ENCODE measurements at regions of chr1 and their contacts with region 1.

Region 1: GRCh38 chr1:165364568-165365133 is 8.1 kb upstream of the LMX1A start:
- DNase-seq: no peak
- ATAC-seq: no peak
- H3K4me3 ChIP-seq: no peak overlapping the region
- H3K4me3 Mint-ChIP-seq: no peak overlapping the region
- H3K27ac ChIP-seq: no peak overlapping the region
- H3K27ac Mint-ChIP-seq: no peak overlapping the region
- H3K4me1 ChIP-seq: no peaks in the 10 kb centered on the region
- H3K4me1 Mint-ChIP-seq: peaks cover 0 to 5% of the 10 kb centered on the region in 2 donors
- H3K27me3 ChIP-seq: no peaks in the 10 kb centered on the region
- H3K27me3 Mint-ChIP-seq: peaks cover 30 to 32% of the 10 kb centered on the region in 2 donors
- CTCF ChIP-seq: no peak

Region 2: DNA sequence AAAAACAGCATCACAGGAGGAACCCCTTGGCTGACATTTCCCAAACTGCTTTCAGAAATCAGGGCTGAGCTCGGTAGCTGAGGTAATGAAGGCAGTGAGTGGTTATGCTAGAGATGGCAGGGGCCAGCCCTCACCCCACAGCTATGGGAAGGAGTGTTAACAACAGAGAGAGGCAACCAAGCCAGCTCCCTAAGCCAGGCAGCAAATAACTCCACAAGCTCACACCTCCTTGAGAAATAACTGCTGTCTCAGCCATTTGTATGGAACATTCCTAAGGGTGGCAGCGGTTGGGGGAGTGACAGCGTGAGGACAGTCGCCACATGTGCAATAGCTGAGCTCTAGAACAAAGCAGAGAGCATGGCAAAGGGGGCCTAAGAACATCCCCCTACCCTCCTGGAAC is 50.7 kb before region 1 on chr1:
- intact Hi-C with region 1: loop called (anchors 5 kb)
- DNase-seq: no peak
- ATAC-seq: no peak
- H3K4me3 ChIP-seq: no peak overlapping the region
- H3K4me3 Mint-ChIP-seq: no peak overlapping the region
- H3K27ac ChIP-seq: no peak overlapping the region
- H3K27ac Mint-ChIP-seq: no peak overlapping the region
- H3K4me1 ChIP-seq: no peaks in the 10 kb centered on the region
- H3K4me1 Mint-ChIP-seq: no peaks in the 10 kb centered on the region
- H3K27me3 ChIP-seq: no peaks in the 10 kb centered on the region
- H3K27me3 Mint-ChIP-seq: peaks cover 16 to 35% of the 10 kb centered on the region in 2 donors
- CTCF ChIP-seq: no peak

Measured in natural killer cell (primary cell).